HepG2 (cell line): ENCODE measurements at regions of chr20 and their contacts with region 1.

Region 1: DNA sequence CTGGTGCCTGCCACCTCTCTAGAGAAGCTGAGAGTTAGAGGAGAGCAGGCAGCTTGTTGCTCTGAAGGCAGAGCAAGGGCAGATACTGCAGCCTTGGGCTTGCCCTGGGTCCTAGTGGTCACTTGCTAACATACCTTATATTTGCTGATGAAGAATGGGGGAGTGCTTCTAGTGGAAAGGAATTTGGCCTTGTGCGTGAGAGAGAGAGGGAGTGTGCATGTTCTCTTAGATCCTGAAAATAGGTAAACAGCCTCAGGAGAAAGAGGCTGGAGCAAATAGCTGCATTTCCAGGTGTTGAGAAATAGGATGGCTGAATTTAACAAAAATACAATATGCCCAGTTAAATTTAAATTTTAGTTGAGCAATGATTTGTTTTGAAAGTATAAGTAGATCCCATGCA is 724.5 kb upstream of the FLRT3 start:
- DNase-seq: peak; percentile 97
- ATAC-seq: peak; percentile 95
- H3K4me3 ChIP-seq: peak overlapping the region in 2 of 3 experiments; percentile 7 to 20; a peak in 2 of 6 replicates
- H3K27ac ChIP-seq: peak overlapping the region; percentile 64
- H3K4me1 ChIP-seq: peaks cover 44% of the 10 kb centered on the region
- H3K27me3 ChIP-seq: no peaks in the 10 kb centered on the region
- CTCF ChIP-seq: peak; percentile 42; the same call in 1 of the 2 replicates
- EP300 ChIP-seq: peak; percentile 90 to 91
- POLR2A ChIP-seq: peak; percentile 22 to 26; a peak in 1 of 4 replicates
- RAD21 ChIP-seq: 0 out of 2 replicates have a peak, but pooled peaks have one; percentile 26

Region 2: GRCh38 chr20:14829906-14830305 is 232.0 kb before region 1 on chr20:
- CTCF ChIA-PET with region 1: no interaction called
- POLR2A ChIA-PET with region 1: no interaction called
- in situ Hi-C with region 1: no loop called
- intact Hi-C with region 1: no loop called
- DNase-seq: no peak
- ATAC-seq: no peak
- H3K4me3 ChIP-seq: no peak overlapping the region
- H3K27ac ChIP-seq: no peak overlapping the region
- H3K4me1 ChIP-seq: no peaks in the 10 kb centered on the region
- H3K27me3 ChIP-seq: no peaks in the 10 kb centered on the region
- CTCF ChIP-seq: no peak
- EP300 ChIP-seq: no peak
- POLR2A ChIP-seq: no peak
- RAD21 ChIP-seq: no peak

Region 3: GRCh38 chr20:14878768-14879697 is 182.9 kb before region 1 on chr20:
- CTCF ChIA-PET with region 1: no interaction called
- POLR2A ChIA-PET with region 1: no interaction called
- in situ Hi-C with region 1: no loop called
- intact Hi-C with region 1: loop called (anchors 5 kb)
- DNase-seq: peak; percentile 83
- ATAC-seq: peak; percentile 85
- H3K4me3 ChIP-seq: no peak overlapping the region; a peak in 1 of 6 replicates
- H3K27ac ChIP-seq: peak overlapping the region; percentile 1
- H3K4me1 ChIP-seq: peaks cover 18% of the 10 kb centered on the region
- H3K27me3 ChIP-seq: no peaks in the 10 kb centered on the region
- CTCF ChIP-seq: no peak
- EP300 ChIP-seq: peak in 1 of 2 experiments; percentile 71; a peak in 2 of 4 replicates
- POLR2A ChIP-seq: no peak
- RAD21 ChIP-seq: no peak

Region 4: DNA sequence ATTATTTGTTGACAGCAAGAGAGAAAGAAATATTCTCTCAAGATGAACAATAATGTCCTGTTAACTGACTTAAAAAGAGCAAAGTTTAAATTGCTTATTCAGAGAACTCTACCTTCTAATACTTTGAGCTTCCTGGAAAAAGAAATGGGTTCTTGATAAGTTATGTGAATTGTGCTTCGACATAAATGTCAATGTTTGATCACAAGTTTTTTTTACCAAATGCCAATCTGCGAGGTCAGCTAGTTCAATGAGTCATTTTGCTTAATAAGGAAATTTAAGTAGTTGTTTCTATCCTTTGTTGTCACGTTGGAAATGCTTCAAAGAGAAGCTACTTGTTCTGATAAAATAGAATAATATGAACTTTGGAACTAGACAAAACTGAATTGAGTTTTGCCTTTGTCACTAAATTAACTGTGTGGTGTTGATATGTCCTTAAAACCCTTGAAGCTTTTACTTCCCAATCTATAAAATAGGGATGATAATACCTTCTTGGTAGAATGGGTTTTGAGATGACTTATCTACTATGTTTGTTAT is 82.4 kb before region 1 on chr20:
- CTCF ChIA-PET with region 1: interaction called, 3 read pairs
- POLR2A ChIA-PET with region 1: interaction called, 59 read pairs
- in situ Hi-C with region 1: no loop called
- intact Hi-C with region 1: no loop called
- DNase-seq: peak; percentile 99
- ATAC-seq: peak; percentile 74
- H3K4me3 ChIP-seq: no peak overlapping the region; a peak in 1 of 6 replicates
- H3K27ac ChIP-seq: peak overlapping the region; percentile 73
- H3K4me1 ChIP-seq: peaks cover 76% of the 10 kb centered on the region
- H3K27me3 ChIP-seq: no peaks in the 10 kb centered on the region
- CTCF ChIP-seq: no peak
- EP300 ChIP-seq: peak in 1 of 2 experiments; percentile 98; a peak in 2 of 4 replicates
- POLR2A ChIP-seq: no peak
- RAD21 ChIP-seq: no peak

Region 5: GRCh38 chr20:14992961-14993360 is 69.0 kb before region 1 on chr20:
- CTCF ChIA-PET with region 1: no interaction called
- POLR2A ChIA-PET with region 1: interaction called, 18 read pairs
- in situ Hi-C with region 1: loop called (anchors 5 kb)
- intact Hi-C with region 1: no loop called
- DNase-seq: peak; percentile 37
- ATAC-seq: no peak
- H3K4me3 ChIP-seq: no peak overlapping the region
- H3K27ac ChIP-seq: no peak overlapping the region
- H3K4me1 ChIP-seq: peaks cover 50% of the 10 kb centered on the region
- H3K27me3 ChIP-seq: no peaks in the 10 kb centered on the region
- CTCF ChIP-seq: no peak
- EP300 ChIP-seq: no peak
- POLR2A ChIP-seq: no peak
- RAD21 ChIP-seq: no peak